PC-3 (cell line): ENCODE measurements at regions of chr1 and their contacts with region 1.

Region 1: GRCh38 chr1:159177273-159177907 is 6.0 kb downstream of the CADM3 start:
- DNase-seq: peak; percentile 82
- ATAC-seq: peak; percentile 81
- H3K4me3 ChIP-seq: no peak overlapping the region
- H3K27ac ChIP-seq: no peak overlapping the region
- H3K4me1 ChIP-seq: no peaks in the 10 kb centered on the region
- H3K27me3 ChIP-seq: peaks cover 55% of the 10 kb centered on the region
- CTCF ChIP-seq: no peak

Region 2: GRCh38 chr1:159141584-159142390 is 35.6 kb before region 1 on chr1:
- CTCF ChIA-PET with region 1: no interaction called
- POLR2A ChIA-PET with region 1: no interaction called
- intact Hi-C with region 1: no loop called
- DNase-seq: peak; percentile 52
- ATAC-seq: no peak
- H3K4me3 ChIP-seq: peak overlapping the region; percentile 20
- H3K27ac ChIP-seq: no peak overlapping the region
- H3K4me1 ChIP-seq: no peaks in the 10 kb centered on the region
- H3K27me3 ChIP-seq: peaks cover 81% of the 10 kb centered on the region
- CTCF ChIP-seq: no peak

Region 3: DNA sequence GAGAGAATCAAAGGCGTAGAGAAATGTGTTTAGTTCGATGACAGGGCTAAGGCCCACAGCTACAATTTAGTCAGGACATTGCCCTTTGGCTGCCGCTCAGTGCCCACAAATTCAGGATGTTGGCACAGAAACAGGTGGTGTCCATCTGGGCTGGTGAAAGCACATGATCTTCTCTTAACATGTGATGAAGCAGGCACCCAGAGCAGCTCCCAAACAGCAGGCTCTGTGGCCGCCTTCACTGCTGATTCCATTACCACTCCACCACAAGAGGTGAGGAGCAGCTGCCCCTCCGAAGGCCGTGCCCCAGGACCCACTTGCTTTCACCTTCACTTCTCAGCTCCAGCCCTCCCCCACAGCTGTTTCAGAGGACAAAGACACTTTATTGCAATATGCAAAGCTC is 52.1 kb after region 1 on chr1:
- CTCF ChIA-PET with region 1: no interaction called
- POLR2A ChIA-PET with region 1: no interaction called
- intact Hi-C with region 1: loop called (anchors 1 kb)
- DNase-seq: peak; percentile 73
- ATAC-seq: peak; percentile 57
- H3K4me3 ChIP-seq: peak overlapping the region; percentile 36
- H3K27ac ChIP-seq: peak overlapping the region; percentile 82
- H3K4me1 ChIP-seq: peaks cover 41% of the 10 kb centered on the region
- H3K27me3 ChIP-seq: no peaks in the 10 kb centered on the region
- CTCF ChIP-seq: no peak